ENCODE measurements at regions of chr6 and their contacts with region 1.

Region 1: DNA sequence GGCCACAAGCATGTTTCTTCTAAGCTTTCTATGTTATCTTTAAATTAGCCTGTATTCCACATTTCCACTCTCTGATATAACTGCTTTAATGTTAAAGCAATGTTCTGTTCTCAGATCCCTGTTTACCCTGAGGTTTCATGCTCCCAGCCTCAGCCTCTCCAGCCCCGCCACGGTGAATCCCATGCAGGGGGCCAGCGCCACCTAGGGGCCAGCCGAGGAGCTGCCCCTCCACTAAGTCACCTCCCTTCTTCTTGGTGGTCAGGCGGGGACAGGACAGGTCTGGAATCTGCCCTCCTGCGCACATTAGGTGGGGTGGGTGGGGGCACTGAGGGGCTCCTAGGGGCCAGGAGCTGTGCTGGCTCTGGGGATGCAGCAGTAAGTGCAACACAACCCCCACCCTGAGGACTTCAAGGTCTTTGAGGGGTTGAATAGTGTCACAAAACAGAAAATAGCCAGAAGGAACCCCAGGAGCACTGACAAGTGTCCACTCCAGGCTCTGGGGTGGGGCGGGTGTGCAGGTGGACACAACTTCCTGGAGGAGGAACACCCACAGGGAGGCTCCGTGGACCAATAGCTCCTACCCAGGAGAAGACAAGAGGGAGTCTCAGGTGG is 61.6 kb downstream of the RAB44 start:
- DNase-seq: peak; percentile 72 to 87 (median 85)
- H3K4me3 ChIP-seq: no peak overlapping the region
- H3K27ac ChIP-seq: no peak overlapping the region
- H3K4me1 ChIP-seq: no peaks in the 10 kb centered on the region
- H3K27me3 ChIP-seq: no peaks in the 10 kb centered on the region
- CTCF ChIP-seq: peak; percentile 91 to 92 (median 92)
- EP300 ChIP-seq: no peak
- POLR2A ChIP-seq: no peak

Region 2: DNA sequence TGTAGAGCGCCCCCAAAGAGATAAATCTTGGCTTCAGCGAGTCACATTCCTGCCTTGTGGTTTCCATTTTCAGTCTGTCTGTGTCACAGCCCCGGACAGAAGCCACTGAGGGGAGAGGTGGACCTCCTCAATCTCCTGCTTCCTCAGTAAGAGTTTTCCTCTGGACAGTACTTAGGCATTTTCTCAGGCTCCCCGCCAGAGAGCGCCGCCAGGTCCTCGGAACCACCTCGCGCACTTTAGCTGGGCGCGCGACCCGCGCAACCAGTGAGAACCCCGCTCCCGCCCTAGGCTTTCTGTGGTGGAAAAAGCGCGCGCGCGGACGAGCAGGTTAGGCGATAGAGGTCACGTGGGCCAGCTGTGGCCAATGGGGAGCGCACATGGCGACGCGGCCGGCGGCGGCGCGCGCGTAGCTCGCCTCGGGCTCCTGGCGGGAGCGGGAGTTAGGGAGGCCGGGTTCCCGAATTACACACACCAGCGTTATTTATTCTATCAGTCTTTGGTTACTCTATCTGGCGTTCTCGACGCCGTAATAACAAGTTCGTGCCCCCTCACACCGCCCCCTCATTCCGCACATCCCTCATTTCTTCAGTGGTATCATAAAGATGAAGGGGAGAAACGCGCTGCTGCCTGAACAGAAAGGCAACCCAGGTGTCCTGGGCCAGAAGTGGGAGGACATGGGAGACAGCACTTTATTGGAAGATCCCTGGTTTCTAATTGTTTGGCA is 336.0 kb before region 1 on chr6:
- intact Hi-C with region 1: loop called in 1 of 4 experiments (anchors 10 kb)
- DNase-seq: peak; percentile 96 to 99 (median 97)
- H3K4me3 ChIP-seq: peak overlapping the region; percentile 26
- H3K27ac ChIP-seq: peak overlapping the region; percentile 75 to 83
- H3K4me1 ChIP-seq: no peaks in the 10 kb centered on the region
- H3K27me3 ChIP-seq: no peaks in the 10 kb centered on the region
- CTCF ChIP-seq: peak; percentile 58 to 83 (median 83)
- EP300 ChIP-seq: no peak
- POLR2A ChIP-seq: peak; percentile 54

Region 3: GRCh38 chr6:36504982-36505381 is 254.3 kb before region 1 on chr6:
- intact Hi-C with region 1: no loop called
- DNase-seq: no peak
- H3K4me3 ChIP-seq: no peak overlapping the region
- H3K27ac ChIP-seq: no peak overlapping the region
- H3K4me1 ChIP-seq: no peaks in the 10 kb centered on the region
- H3K27me3 ChIP-seq: no peaks in the 10 kb centered on the region
- CTCF ChIP-seq: no peak
- EP300 ChIP-seq: no peak
- POLR2A ChIP-seq: no peak

Region 4: GRCh38 chr6:36615018-36615761 is 144.1 kb before region 1 on chr6:
- intact Hi-C with region 1: loop called (anchors 5 to 10 kb)
- DNase-seq: peak in 4 of 5 donors; percentile 20 to 60 (median 39)
- H3K4me3 ChIP-seq: no peak overlapping the region
- H3K27ac ChIP-seq: no peak overlapping the region
- H3K4me1 ChIP-seq: no peaks in the 10 kb centered on the region
- H3K27me3 ChIP-seq: no peaks in the 10 kb centered on the region
- CTCF ChIP-seq: peak; percentile 38 to 63 (median 58)
- EP300 ChIP-seq: no peak
- POLR2A ChIP-seq: no peak

Region 5: GRCh38 chr6:36623547-36624459 is 135.5 kb before region 1 on chr6:
- intact Hi-C with region 1: loop called in 3 of 4 experiments (anchors 5 to 10 kb)
- DNase-seq: peak; percentile 91 to 96 (median 94)
- H3K4me3 ChIP-seq: no peak overlapping the region
- H3K27ac ChIP-seq: peak overlapping the region; percentile 76 to 80
- H3K4me1 ChIP-seq: peaks cover 20% of the 10 kb centered on the region
- H3K27me3 ChIP-seq: no peaks in the 10 kb centered on the region
- CTCF ChIP-seq: peak; percentile 39 to 94 (median 87)
- EP300 ChIP-seq: no peak
- POLR2A ChIP-seq: no peak

Region 6: GRCh38 chr6:36706339-36706738 is 52.9 kb before region 1 on chr6:
- intact Hi-C with region 1: loop called in 1 of 4 experiments (anchors 2 kb)
- DNase-seq: no peak
- H3K4me3 ChIP-seq: no peak overlapping the region
- H3K27ac ChIP-seq: no peak overlapping the region
- H3K4me1 ChIP-seq: no peaks in the 10 kb centered on the region
- H3K27me3 ChIP-seq: no peaks in the 10 kb centered on the region
- CTCF ChIP-seq: no peak
- EP300 ChIP-seq: no peak
- POLR2A ChIP-seq: no peak

Region 7: DNA sequence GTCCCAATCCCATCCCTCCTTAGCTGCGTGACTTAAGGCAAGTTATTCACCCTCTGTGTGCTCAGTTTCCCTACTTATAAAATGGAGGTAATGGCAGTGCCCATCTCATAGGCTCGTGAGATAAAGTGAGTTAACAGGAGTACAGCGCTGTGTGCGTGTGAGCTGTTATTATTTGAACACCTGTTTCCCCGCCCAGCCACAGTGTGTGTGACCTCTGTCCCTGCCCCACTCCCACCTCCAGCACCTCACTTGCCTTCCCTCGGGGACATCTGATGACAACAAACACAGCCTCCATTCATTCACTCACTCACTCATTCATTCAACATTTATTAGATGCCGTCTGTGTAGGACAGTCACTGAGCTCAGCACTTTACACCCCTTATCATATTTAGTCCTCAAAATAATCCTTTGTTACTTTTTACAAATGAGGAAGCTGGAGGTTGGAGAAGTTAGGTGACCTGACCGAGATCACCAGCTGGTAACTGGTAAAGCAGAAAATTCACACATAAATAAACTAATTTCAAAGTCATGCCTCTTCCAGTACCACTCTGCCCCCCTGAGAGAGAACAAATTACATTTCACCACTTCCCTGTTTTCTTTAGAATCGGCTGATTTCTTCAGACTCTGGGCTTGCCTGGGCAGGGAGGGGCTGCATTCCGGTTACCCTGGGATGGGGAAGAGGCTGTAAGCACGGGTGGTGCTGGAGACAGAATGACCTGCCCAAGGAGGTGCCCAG is 21.4 kb after region 1 on chr6:
- intact Hi-C with region 1: no loop called
- DNase-seq: no peak
- H3K4me3 ChIP-seq: no peak overlapping the region
- H3K27ac ChIP-seq: no peak overlapping the region
- H3K4me1 ChIP-seq: no peaks in the 10 kb centered on the region
- H3K27me3 ChIP-seq: no peaks in the 10 kb centered on the region
- CTCF ChIP-seq: no peak
- EP300 ChIP-seq: no peak
- POLR2A ChIP-seq: no peak

Region 8: DNA sequence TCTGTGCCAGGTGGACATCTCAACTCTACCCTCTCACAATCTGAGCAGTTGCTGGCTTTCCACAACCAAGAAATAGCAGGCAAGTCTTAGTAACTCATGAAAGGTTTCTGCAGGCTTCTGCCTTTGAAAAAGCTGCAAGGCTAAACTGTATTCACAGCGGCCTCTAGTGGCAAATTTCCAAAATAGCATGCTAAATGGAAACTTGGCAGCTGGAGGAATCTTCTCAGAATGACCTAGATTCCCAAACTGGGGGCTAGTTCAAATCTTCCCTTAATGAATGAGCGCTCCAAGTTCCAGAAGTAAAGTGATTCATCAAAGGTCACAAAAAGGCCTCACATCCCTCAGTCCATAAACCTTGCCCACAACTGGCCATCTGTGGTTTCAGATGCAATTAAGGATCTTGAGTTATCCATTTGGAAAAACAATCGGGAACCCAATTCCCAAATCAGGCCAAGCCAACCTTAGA is 91.9 kb after region 1 on chr6:
- intact Hi-C with region 1: no loop called
- DNase-seq: peak in 2 of 5 donors; percentile 48 to 76
- H3K4me3 ChIP-seq: no peak overlapping the region
- H3K27ac ChIP-seq: no peak overlapping the region
- H3K4me1 ChIP-seq: no peaks in the 10 kb centered on the region
- H3K27me3 ChIP-seq: no peaks in the 10 kb centered on the region
- CTCF ChIP-seq: peak; percentile 38 to 69 (median 63)
- EP300 ChIP-seq: no peak
- POLR2A ChIP-seq: no peak

Region 9: GRCh38 chr6:36897609-36898008 is 138.4 kb after region 1 on chr6:
- intact Hi-C with region 1: no loop called
- DNase-seq: no peak
- H3K4me3 ChIP-seq: no peak overlapping the region
- H3K27ac ChIP-seq: no peak overlapping the region
- H3K4me1 ChIP-seq: peaks cover 1% of the 10 kb centered on the region
- H3K27me3 ChIP-seq: no peaks in the 10 kb centered on the region
- CTCF ChIP-seq: peak in 1 of 3 donors; percentile 24
- EP300 ChIP-seq: no peak
- POLR2A ChIP-seq: no peak